ENCODE measurements at regions of chr11 and their contacts with region 1.

Region 1: DNA sequence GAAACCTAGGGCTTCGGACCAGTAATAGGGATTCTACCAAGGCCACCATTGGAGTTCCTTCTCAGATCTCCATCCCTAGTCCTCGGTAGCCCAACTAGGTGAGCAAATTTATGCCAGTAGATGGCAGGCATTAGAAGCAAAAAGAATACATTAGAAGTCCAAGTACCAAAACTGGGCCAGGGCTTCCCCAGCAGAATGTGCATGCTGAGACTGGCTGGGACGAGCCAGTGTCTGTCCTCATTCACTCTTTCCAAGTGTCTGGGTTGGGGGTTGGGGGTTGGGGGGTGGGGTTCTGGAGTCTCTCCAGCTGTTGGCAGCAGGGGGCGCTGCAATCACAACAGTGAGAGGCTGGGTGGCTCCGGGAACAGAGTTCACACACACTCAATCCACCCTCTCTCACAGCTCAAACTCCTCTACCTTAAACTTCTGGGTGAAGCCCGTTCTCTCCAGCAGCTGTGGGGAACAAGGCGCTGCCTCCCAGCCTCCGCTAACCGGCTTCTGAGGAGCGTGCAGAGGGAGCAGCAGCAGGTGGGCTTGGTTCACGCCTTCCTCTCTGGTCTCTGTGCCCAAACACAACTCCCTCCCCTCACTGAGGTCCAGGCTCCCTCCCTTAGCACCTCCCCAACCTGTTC is 57.5 kb downstream of the BTG4 start:
- DNase-seq: peak; percentile 63
- H3K4me3 Mint-ChIP-seq: no peak overlapping the region
- H3K27ac Mint-ChIP-seq: no peak overlapping the region
- H3K4me1 Mint-ChIP-seq: peaks cover 6% of the 10 kb centered on the region
- H3K27me3 Mint-ChIP-seq: peaks cover 17% of the 10 kb centered on the region
- CTCF ChIP-seq: peak; percentile 81

Region 2: GRCh38 chr11:111283945-111284481 is 170.7 kb before region 1 on chr11:
- CTCF ChIA-PET with region 1: interaction called, 42 read pairs
- POLR2A ChIA-PET with region 1: no interaction called
- intact Hi-C with region 1: no loop called
- DNase-seq: no peak
- H3K4me3 Mint-ChIP-seq: no peak overlapping the region
- H3K27ac Mint-ChIP-seq: no peak overlapping the region
- H3K4me1 Mint-ChIP-seq: no peaks in the 10 kb centered on the region
- H3K27me3 Mint-ChIP-seq: peaks cover 28% of the 10 kb centered on the region
- CTCF ChIP-seq: no peak

Region 3: GRCh38 chr11:111465400-111465799 is 10.7 kb after region 1 on chr11:
- CTCF ChIA-PET with region 1: interaction called, 14 read pairs
- POLR2A ChIA-PET with region 1: no interaction called
- intact Hi-C with region 1: no loop called
- DNase-seq: peak; percentile 36
- H3K4me3 Mint-ChIP-seq: no peak overlapping the region
- H3K27ac Mint-ChIP-seq: no peak overlapping the region
- H3K4me1 Mint-ChIP-seq: peaks cover 10% of the 10 kb centered on the region
- H3K27me3 Mint-ChIP-seq: no peaks in the 10 kb centered on the region
- CTCF ChIP-seq: no peak

Region 4: DNA sequence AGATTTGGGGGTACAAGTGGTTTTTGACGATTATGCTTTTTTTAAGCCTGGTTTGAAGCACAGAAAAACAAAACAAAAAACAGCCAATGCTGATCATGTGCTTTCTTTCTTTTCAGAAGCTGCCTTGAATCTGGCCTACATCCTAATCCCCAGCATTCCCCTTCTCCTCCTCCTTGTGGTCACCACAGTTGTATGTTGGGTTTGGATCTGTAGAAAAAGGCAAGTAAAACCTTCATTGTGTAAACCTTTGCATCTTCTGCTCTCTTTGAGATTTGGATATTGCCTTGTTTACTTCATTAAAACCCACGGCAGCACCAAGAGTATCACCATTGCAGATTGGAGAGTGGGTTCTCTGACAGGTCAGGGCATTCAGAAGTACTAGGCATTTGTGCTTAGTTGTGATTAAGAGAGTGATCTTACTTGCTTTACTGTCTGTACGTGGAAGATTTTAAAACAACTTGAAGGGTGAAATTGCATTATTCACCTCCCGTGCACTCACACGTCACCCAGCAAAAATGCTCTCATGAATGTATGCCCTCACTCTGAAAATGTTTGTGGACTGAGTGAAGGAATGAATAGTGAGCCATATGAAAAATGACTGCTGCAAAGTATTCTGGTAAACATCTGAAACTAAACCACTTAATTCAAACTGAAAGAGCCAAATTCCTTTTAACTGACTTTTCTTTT is 102.9 kb after region 1 on chr11:
- CTCF ChIA-PET with region 1: interaction called, 25 read pairs
- POLR2A ChIA-PET with region 1: interaction called, 5 read pairs
- intact Hi-C with region 1: no loop called
- DNase-seq: peak; percentile 20
- H3K4me3 Mint-ChIP-seq: no peak overlapping the region
- H3K27ac Mint-ChIP-seq: peak overlapping the region; percentile 83
- H3K4me1 Mint-ChIP-seq: peaks cover 31% of the 10 kb centered on the region
- H3K27me3 Mint-ChIP-seq: no peaks in the 10 kb centered on the region
- CTCF ChIP-seq: no peak

Region 5: DNA sequence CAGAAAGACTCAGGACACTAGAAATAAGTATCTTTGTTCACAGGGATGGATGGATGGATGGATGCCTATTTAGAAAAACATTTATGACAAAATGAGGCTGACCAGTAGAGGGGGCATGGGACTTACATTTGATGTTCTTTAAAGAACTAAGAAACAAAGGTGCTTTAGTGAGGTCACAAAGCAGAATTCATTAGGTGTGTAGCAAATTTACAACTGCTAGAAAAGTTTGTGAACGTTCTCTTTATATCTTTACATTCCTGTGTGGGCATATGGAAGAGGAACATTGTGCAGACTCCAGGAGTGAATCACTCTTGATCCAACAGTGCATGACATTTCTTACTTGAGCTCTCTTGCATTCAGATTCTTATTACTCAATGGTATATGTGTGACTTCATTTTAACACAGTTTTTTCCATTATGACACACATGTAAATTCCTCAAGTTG is 131.7 kb after region 1 on chr11:
- CTCF ChIA-PET with region 1: interaction called, 17 read pairs
- POLR2A ChIA-PET with region 1: no interaction called
- intact Hi-C with region 1: loop called (anchors 5 kb)
- DNase-seq: peak; percentile 55
- H3K4me3 Mint-ChIP-seq: no peak overlapping the region
- H3K27ac Mint-ChIP-seq: no peak overlapping the region
- H3K4me1 Mint-ChIP-seq: no peaks in the 10 kb centered on the region
- H3K27me3 Mint-ChIP-seq: no peaks in the 10 kb centered on the region
- CTCF ChIP-seq: peak; percentile 40

Region 6: GRCh38 chr11:111841370-111842053 is 386.8 kb after region 1 on chr11:
- CTCF ChIA-PET with region 1: interaction called, 10 read pairs
- POLR2A ChIA-PET with region 1: no interaction called
- intact Hi-C with region 1: loop called (anchors 2 kb)
- DNase-seq: peak; percentile 82
- H3K4me3 Mint-ChIP-seq: no peak overlapping the region
- H3K27ac Mint-ChIP-seq: no peak overlapping the region
- H3K4me1 Mint-ChIP-seq: no peaks in the 10 kb centered on the region
- H3K27me3 Mint-ChIP-seq: no peaks in the 10 kb centered on the region
- CTCF ChIP-seq: peak; percentile 79

Measured in MCF 10A (cell line).